CD8-positive, alpha-beta T cell (primary cell): ENCODE measurements at regions of chr17 and their contacts with region 1.

Region 1: GRCh38 chr17:17041571-17042380 is 481 bp upstream of the MPRIP start:
- DNase-seq: peak; percentile 93 to 99 (median 98)
- ATAC-seq: peak; percentile 97
- H3K4me3 ChIP-seq: peak overlapping the region; percentile 51 to 70
- H3K4me3 Mint-ChIP-seq: peak overlapping the region; percentile 70
- H3K27ac ChIP-seq: peak overlapping the region in 1 of 2 experiments; percentile 40
- H3K27ac Mint-ChIP-seq: peak overlapping the region; percentile 28
- H3K4me1 ChIP-seq: peaks cover 35% of the 10 kb centered on the region
- H3K4me1 Mint-ChIP-seq: peaks cover 44% of the 10 kb centered on the region
- H3K27me3 ChIP-seq: no peaks in the 10 kb centered on the region
- H3K27me3 Mint-ChIP-seq: no peaks in the 10 kb centered on the region
- CTCF ChIP-seq: no peak

Region 2: DNA sequence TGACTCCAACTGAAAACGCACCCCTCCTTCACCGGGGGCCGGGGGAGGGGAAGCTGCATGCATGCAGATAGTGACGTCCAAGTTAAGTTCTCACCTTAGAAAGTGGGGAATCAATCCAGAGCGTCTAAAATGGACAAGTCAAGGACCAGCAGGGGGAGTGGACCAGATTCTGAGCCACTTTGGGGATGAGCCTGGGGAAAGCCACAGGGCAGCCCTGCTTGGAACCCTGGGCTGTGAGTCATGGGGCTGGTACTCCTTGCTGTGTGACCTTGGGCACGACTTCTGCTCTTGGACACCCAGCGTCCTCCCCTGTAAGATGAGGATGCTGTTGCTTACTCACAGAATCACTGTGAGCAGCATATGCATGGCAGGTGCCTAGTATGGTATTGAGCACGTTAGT is 79.0 kb before region 1 on chr17:
- CTCF ChIA-PET with region 1: no interaction called
- POLR2A ChIA-PET with region 1: no interaction called
- intact Hi-C with region 1: no loop called
- DNase-seq: no peak
- ATAC-seq: no peak
- H3K4me3 ChIP-seq: no peak overlapping the region
- H3K4me3 Mint-ChIP-seq: no peak overlapping the region
- H3K27ac ChIP-seq: no peak overlapping the region
- H3K27ac Mint-ChIP-seq: no peak overlapping the region
- H3K4me1 ChIP-seq: no peaks in the 10 kb centered on the region
- H3K4me1 Mint-ChIP-seq: no peaks in the 10 kb centered on the region
- H3K27me3 ChIP-seq: no peaks in the 10 kb centered on the region
- H3K27me3 Mint-ChIP-seq: peaks cover 13% of the 10 kb centered on the region
- CTCF ChIP-seq: no peak

Region 3: GRCh38 chr17:16973760-16974540 is 67.8 kb before region 1 on chr17:
- CTCF ChIA-PET with region 1: no interaction called
- POLR2A ChIA-PET with region 1: no interaction called
- intact Hi-C with region 1: no loop called
- DNase-seq: no peak
- ATAC-seq: no peak
- H3K4me3 ChIP-seq: no peak overlapping the region
- H3K4me3 Mint-ChIP-seq: no peak overlapping the region
- H3K27ac ChIP-seq: no peak overlapping the region
- H3K27ac Mint-ChIP-seq: no peak overlapping the region
- H3K4me1 ChIP-seq: no peaks in the 10 kb centered on the region
- H3K4me1 Mint-ChIP-seq: no peaks in the 10 kb centered on the region
- H3K27me3 ChIP-seq: no peaks in the 10 kb centered on the region
- H3K27me3 Mint-ChIP-seq: no peaks in the 10 kb centered on the region
- CTCF ChIP-seq: no peak

Region 4: GRCh38 chr17:17022438-17022837 is 19.3 kb before region 1 on chr17:
- CTCF ChIA-PET with region 1: no interaction called
- POLR2A ChIA-PET with region 1: no interaction called
- intact Hi-C with region 1: no loop called
- DNase-seq: no peak
- ATAC-seq: no peak
- H3K4me3 ChIP-seq: no peak overlapping the region
- H3K4me3 Mint-ChIP-seq: no peak overlapping the region
- H3K27ac ChIP-seq: no peak overlapping the region
- H3K27ac Mint-ChIP-seq: no peak overlapping the region
- H3K4me1 ChIP-seq: peaks cover 3% of the 10 kb centered on the region
- H3K4me1 Mint-ChIP-seq: peaks cover 3% of the 10 kb centered on the region
- H3K27me3 ChIP-seq: no peaks in the 10 kb centered on the region
- H3K27me3 Mint-ChIP-seq: no peaks in the 10 kb centered on the region
- CTCF ChIP-seq: no peak

Region 5: DNA sequence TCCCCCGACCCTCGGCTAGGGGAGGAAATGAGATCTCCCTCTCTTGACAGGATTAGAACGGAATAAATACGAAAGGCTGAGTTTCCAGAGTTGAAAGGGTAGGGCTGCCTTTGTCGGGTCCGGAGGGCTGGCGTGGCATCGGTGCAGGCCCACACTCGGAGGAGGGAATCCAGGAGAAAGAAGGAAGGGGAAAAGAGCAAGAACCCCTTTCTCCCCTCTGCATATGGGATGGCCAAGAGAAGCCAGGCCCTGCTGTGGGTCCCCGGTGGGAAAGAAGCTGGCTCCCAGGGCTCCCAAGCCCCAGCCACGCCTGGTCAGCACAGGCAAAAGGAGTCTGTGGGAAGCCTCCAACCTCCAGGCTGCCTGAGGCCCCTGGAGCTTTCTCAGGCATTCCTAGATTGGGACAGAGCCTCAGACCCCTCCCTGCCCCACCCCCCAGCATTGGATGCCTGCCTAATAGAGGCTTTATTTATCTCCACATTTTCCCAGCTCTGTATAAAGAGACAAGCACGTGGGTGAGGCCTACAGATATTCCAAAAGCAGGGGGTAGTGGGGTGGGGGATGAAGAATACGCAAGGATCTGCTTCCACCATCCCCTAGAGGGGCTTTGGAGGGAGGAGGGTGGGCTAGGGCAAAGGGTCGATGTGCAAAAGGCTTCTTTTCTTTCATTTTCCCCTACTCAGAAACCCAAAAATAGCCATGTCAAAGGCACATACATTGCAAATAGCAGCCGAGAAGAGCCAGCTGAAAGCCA is 56.8 kb after region 1 on chr17:
- CTCF ChIA-PET with region 1: no interaction called
- POLR2A ChIA-PET with region 1: no interaction called
- intact Hi-C with region 1: loop called in 1 of 2 experiments (anchors 10 kb)
- DNase-seq: no peak
- ATAC-seq: no peak
- H3K4me3 ChIP-seq: no peak overlapping the region
- H3K4me3 Mint-ChIP-seq: no peak overlapping the region
- H3K27ac ChIP-seq: no peak overlapping the region
- H3K27ac Mint-ChIP-seq: no peak overlapping the region
- H3K4me1 ChIP-seq: no peaks in the 10 kb centered on the region
- H3K4me1 Mint-ChIP-seq: peaks cover 5% of the 10 kb centered on the region
- H3K27me3 ChIP-seq: no peaks in the 10 kb centered on the region
- H3K27me3 Mint-ChIP-seq: no peaks in the 10 kb centered on the region
- CTCF ChIP-seq: no peak

Region 6: DNA sequence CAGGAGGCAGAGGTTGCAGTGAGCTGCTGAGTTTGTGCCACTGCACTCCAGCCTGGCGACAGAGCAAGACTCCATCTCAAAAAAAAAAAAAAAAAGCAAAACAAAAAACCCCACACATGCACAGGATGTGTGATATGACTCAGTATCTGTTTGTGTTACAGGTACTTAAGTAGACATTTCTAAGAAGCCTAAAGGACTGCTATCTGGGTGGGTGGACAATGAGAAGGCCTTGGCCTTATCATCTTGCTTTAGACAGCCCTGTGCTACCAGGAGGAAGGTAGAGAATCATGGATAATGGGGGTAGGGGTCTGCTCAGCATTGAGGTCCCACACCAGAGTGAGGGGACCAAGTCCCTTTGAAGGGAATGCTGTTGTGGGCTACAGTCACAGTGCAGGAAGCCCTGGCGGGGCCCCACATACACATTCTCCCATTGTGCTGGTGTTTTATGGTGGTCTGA is 137.6 kb after region 1 on chr17:
- CTCF ChIA-PET with region 1: no interaction called
- POLR2A ChIA-PET with region 1: no interaction called
- intact Hi-C with region 1: loop called in 1 of 2 experiments (anchors 5 kb)
- DNase-seq: peak in 4 of 9 experiments; percentile 35 to 74 (median 57)
- ATAC-seq: peak; percentile 65
- H3K4me3 ChIP-seq: peak overlapping the region in 1 of 2 experiments; percentile 7
- H3K4me3 Mint-ChIP-seq: peak overlapping the region; percentile 71
- H3K27ac ChIP-seq: peak overlapping the region; percentile 26 to 41
- H3K27ac Mint-ChIP-seq: peak overlapping the region; percentile 97
- H3K4me1 ChIP-seq: peaks cover 94% of the 10 kb centered on the region
- H3K4me1 Mint-ChIP-seq: peaks cover 84% of the 10 kb centered on the region
- H3K27me3 ChIP-seq: no peaks in the 10 kb centered on the region
- H3K27me3 Mint-ChIP-seq: no peaks in the 10 kb centered on the region
- CTCF ChIP-seq: no peak

Region 7: GRCh38 chr17:17280613-17281549 is 239.1 kb after region 1 on chr17 and contains the start of gene COPS3:
- CTCF ChIA-PET with region 1: no interaction called
- POLR2A ChIA-PET with region 1: interaction called, 5 read pairs
- intact Hi-C with region 1: loop called (anchors 1 to 2 kb)
- DNase-seq: peak; percentile 91 to 99 (median 97)
- ATAC-seq: peak; percentile 88
- H3K4me3 ChIP-seq: peak within 1 kb of the TSS; percentile 74 to 93
- H3K4me3 Mint-ChIP-seq: peak within 1 kb of the TSS; percentile 96
- H3K27ac ChIP-seq: peak within 1 kb of the TSS; percentile 74 to 92
- H3K27ac Mint-ChIP-seq: peak within 1 kb of the TSS; percentile 87
- H3K4me1 ChIP-seq: peaks cover 26% of the 10 kb centered on the region
- H3K4me1 Mint-ChIP-seq: peaks cover 38% of the 10 kb centered on the region
- H3K27me3 ChIP-seq: no peaks in the 10 kb centered on the region
- H3K27me3 Mint-ChIP-seq: no peaks in the 10 kb centered on the region
- CTCF ChIP-seq: no peak
- total RNA-seq, gene COPS3: 94.1 to 96.3 TPM